ENCODE measurements at regions of chr5 and their contacts with region 1.

Region 1: DNA sequence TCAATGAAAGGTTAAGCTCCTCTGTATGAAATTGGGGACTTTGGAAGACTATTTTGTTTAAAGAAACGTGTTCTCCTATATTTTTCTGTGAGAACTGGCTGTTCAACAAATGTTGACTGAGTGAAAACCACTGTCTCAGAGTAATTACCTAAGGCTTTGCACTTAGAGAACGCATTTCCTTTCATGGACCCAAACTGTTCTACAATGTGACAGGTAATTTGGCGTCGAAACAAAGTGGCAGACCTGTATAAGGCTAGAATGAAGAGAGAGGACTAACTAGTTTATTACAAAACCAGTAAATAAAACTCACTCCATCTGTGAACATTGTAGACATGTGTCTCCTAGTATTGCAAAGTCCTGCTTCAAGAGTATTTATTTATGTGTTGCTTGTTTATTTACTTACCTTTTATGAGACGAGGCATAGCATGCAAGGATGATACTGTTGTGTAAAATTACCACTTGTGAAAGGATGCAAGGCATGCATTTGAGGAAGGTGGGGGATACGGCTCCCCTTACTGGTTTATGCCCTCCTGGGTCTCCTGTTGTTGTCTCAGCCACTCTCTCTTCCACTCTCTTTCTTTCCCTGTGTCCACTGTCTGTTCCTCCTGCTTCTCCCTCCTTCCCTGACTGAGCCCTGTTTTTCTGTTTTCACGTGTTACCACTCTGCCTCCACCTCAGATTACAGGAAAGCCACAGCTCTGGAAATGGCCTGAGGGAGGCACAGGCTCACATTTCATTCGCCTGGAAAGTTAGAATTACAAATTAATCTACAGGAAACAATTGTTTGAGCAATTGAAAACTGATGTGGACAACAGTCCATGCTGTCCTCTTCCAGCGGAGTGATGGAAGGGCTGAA is 444.0 kb upstream of the ZNF608 start:
- DNase-seq: no peak
- ATAC-seq: no peak
- H3K4me3 ChIP-seq: no peak overlapping the region
- H3K4me3 Mint-ChIP-seq: no peak overlapping the region
- H3K27ac ChIP-seq: no peak overlapping the region
- H3K27ac Mint-ChIP-seq: no peak overlapping the region
- H3K4me1 ChIP-seq: no peaks in the 10 kb centered on the region
- H3K4me1 Mint-ChIP-seq: no peaks in the 10 kb centered on the region
- H3K27me3 ChIP-seq: no peaks in the 10 kb centered on the region
- H3K27me3 Mint-ChIP-seq: no peaks in the 10 kb centered on the region

Region 2: GRCh38 chr5:125012727-125013451 is 177.6 kb before region 1 on chr5:
- CTCF ChIA-PET with region 1: no interaction called
- POLR2A ChIA-PET with region 1: interaction called in 1 of 2 experiments, 11 read pairs
- DNase-seq: no peak
- ATAC-seq: no peak
- H3K4me3 ChIP-seq: no peak overlapping the region
- H3K4me3 Mint-ChIP-seq: no peak overlapping the region
- H3K27ac ChIP-seq: no peak overlapping the region
- H3K27ac Mint-ChIP-seq: no peak overlapping the region
- H3K4me1 ChIP-seq: no peaks in the 10 kb centered on the region
- H3K4me1 Mint-ChIP-seq: no peaks in the 10 kb centered on the region
- H3K27me3 ChIP-seq: no peaks in the 10 kb centered on the region
- H3K27me3 Mint-ChIP-seq: no peaks in the 10 kb centered on the region

Region 3: DNA sequence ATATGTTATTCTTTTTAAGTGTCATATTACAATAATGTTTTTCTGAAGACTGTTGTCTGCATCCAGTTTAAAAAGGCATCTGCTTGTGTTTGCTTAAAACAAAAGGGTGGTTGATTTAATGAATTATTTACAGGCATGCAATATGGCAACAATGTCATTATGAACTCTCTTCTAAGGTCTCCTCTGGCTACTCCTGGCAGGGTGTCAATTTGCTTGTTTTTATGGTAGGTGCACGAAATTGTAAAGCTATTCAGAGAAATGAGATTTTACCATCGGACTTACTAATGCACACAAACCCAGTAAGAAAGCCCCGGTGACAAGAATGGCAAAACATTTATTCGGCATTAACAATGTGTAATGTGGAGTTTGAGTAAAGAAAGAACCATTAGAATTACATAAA is 95.8 kb after region 1 on chr5:
- CTCF ChIA-PET with region 1: no interaction called
- POLR2A ChIA-PET with region 1: no interaction called
- DNase-seq: no peak
- ATAC-seq: no peak
- H3K4me3 ChIP-seq: no peak overlapping the region
- H3K4me3 Mint-ChIP-seq: no peak overlapping the region
- H3K27ac ChIP-seq: no peak overlapping the region
- H3K27ac Mint-ChIP-seq: no peak overlapping the region
- H3K4me1 ChIP-seq: no peaks in the 10 kb centered on the region
- H3K4me1 Mint-ChIP-seq: no peaks in the 10 kb centered on the region
- H3K27me3 ChIP-seq: no peaks in the 10 kb centered on the region
- H3K27me3 Mint-ChIP-seq: no peaks in the 10 kb centered on the region

Region 4: GRCh38 chr5:125484742-125485641 is 294.5 kb after region 1 on chr5:
- CTCF ChIA-PET with region 1: no interaction called
- POLR2A ChIA-PET with region 1: no interaction called
- DNase-seq: no peak
- ATAC-seq: no peak
- H3K4me3 ChIP-seq: no peak overlapping the region
- H3K4me3 Mint-ChIP-seq: no peak overlapping the region
- H3K27ac ChIP-seq: no peak overlapping the region
- H3K27ac Mint-ChIP-seq: no peak overlapping the region
- H3K4me1 ChIP-seq: no peaks in the 10 kb centered on the region
- H3K4me1 Mint-ChIP-seq: no peaks in the 10 kb centered on the region
- H3K27me3 ChIP-seq: no peaks in the 10 kb centered on the region
- H3K27me3 Mint-ChIP-seq: no peaks in the 10 kb centered on the region

Measured in T-cell (primary cell).